Panc1 (cell line): ENCODE measurements at regions of chr15 and their contacts with region 1.

Region 1: GRCh38 chr15:70241621-70242320 is 144.1 kb upstream of the TLE3 start:
- DNase-seq: no peak
- ATAC-seq: no peak
- H3K4me3 ChIP-seq: no peak overlapping the region
- H3K27ac ChIP-seq: no peak overlapping the region
- H3K4me1 ChIP-seq: peaks cover 9% of the 10 kb centered on the region
- H3K27me3 ChIP-seq: no peaks in the 10 kb centered on the region
- CTCF ChIP-seq: no peak

Region 2: GRCh38 chr15:69719527-69720240 is 522.1 kb before region 1 on chr15:
- CTCF ChIA-PET with region 1: no interaction called
- POLR2A ChIA-PET with region 1: no interaction called
- in situ Hi-C with region 1: no loop called
- intact Hi-C with region 1: no loop called
- DNase-seq: no peak
- ATAC-seq: no peak
- H3K4me3 ChIP-seq: no peak overlapping the region
- H3K27ac ChIP-seq: no peak overlapping the region
- H3K4me1 ChIP-seq: no peaks in the 10 kb centered on the region
- H3K27me3 ChIP-seq: no peaks in the 10 kb centered on the region
- CTCF ChIP-seq: no peak

Region 3: DNA sequence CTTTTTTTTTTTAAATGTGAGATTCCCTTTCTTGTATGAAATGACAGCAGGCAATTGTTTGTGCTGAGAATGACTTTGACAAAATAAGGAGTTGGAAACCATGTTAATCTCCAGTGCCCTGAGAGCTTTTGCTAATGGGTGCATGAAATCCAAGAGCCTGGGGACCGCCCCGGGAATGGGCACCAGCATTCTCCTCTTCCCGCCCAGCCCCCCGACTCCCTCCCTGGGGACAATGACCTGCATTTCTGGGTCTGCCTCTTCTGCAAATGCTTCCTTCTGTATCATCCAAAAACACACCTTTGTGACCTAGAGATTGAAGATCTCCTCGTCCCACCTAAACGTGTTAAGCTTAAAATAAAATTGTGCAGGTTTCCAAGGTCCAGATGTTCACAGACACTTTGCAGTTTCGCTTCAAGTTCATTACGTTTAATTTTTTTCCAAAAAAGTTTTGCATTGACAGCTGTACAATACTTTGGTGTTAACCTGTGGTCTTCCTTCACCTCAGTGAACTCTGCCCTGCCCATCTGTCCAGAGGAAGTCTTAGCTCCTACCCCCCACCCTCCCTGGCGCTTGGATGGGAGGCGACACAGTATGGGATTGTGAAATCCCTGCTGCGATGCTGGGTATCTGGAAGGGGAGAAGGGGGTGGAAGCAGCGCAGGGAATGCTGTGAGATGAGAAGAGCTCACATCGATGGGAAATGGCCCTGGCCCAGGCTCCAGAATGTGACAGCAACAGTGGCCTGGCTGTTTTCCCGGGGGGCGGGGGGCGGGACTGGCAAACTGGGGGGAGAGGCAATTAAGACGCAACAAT is 194.2 kb before region 1 on chr15:
- CTCF ChIA-PET with region 1: no interaction called
- POLR2A ChIA-PET with region 1: interaction called, 11 read pairs
- in situ Hi-C with region 1: no loop called
- intact Hi-C with region 1: no loop called
- DNase-seq: no peak
- ATAC-seq: no peak
- H3K4me3 ChIP-seq: no peak overlapping the region
- H3K27ac ChIP-seq: no peak overlapping the region
- H3K4me1 ChIP-seq: no peaks in the 10 kb centered on the region
- H3K27me3 ChIP-seq: no peaks in the 10 kb centered on the region
- CTCF ChIP-seq: no peak